GM10248 (cell line): ENCODE measurements at regions of chr4 and their contacts with region 1.

Region 1: GRCh38 chr4:15636835-15637234 is 18.3 kb downstream of the FBXL5 start:
- DNase-seq: no peak
- CTCF ChIP-seq: no peak

Region 2: DNA sequence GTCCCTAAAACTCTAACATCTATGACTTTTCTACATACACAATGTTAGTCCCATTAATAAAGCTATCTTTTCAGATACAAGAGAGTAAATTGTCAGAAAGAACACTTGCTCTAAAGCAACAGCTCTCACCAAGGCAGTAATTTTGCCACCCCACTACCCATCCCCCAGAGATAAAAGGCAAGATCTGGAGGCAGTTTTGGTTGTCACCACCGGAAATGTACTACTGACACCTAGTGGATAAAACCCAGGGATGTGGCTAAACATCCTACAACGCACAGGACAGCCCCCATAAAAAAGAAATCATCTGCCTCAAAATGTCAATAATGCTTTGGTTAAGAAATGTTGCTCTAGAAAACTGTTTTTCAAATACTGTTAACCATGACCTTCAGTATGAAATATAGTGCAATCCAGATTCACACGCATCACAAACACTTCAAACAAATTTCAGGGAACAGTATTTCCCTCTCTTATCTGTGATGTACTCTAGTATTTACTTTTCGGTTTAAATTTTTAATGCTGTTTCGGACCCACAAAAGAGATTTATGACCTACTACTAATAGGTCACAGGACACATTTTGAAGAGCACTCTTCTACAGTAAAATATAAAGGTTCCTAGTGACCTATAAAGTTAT is 13.2 kb after region 1 on chr4:
- CTCF ChIA-PET with region 1: interaction called, 16 read pairs
- POLR2A ChIA-PET with region 1: no interaction called
- DNase-seq: peak; percentile 27
- CTCF ChIP-seq: peak; percentile 69